OCI-LY7 (cell line): ENCODE measurements at regions of chr12 and their contacts with region 1.

Region 1: GRCh38 chr12:3299929-3300832 is 190.8 kb upstream of the PRMT8 start:
- DNase-seq: peak; percentile 78
- H3K4me3 ChIP-seq: no peak overlapping the region
- H3K27ac ChIP-seq: no peak overlapping the region
- H3K4me1 ChIP-seq: no peaks in the 10 kb centered on the region
- CTCF ChIP-seq: peak; percentile 86

Region 2: GRCh38 chr12:1398673-1399072 is 1901.5 kb before region 1 on chr12:
- CTCF ChIA-PET with region 1: no interaction called
- POLR2A ChIA-PET with region 1: interaction called, 11 read pairs
- intact Hi-C with region 1: no loop called
- DNase-seq: no peak
- H3K4me3 ChIP-seq: no peak overlapping the region
- H3K27ac ChIP-seq: no peak overlapping the region
- H3K4me1 ChIP-seq: no peaks in the 10 kb centered on the region
- CTCF ChIP-seq: no peak

Region 3: DNA sequence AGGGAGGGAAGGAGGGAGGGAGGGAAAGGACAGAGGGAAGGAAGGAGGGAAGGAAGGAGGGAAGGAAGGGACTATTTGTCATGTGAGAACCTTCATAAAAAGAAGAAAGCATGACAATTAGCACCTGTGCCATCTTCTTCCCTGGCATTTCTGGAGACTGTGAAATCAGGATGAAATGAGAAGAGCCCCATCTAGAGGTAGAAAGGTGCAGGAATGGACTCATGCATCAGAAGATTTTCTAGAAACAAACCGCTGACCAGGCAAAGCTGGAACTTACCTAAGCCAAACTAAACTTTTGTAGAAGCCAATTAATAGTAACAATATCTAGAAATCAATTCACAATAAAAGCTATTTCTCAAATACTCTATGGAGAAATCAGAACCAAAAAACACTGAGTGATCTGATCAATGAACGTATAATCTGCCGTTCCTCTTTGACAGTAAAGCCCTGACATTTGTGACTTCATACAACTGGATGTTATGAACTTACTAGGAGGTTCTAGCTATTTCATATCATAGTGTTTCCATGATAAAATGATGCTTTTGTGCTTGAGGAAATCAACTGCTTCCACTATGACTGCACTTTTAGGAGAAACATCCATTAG is 477.1 kb after region 1 on chr12:
- CTCF ChIA-PET with region 1: interaction called, 7 read pairs
- POLR2A ChIA-PET with region 1: no interaction called
- intact Hi-C with region 1: loop called (anchors 1 kb)
- DNase-seq: peak; percentile 50
- H3K4me3 ChIP-seq: no peak overlapping the region
- H3K27ac ChIP-seq: no peak overlapping the region
- H3K4me1 ChIP-seq: no peaks in the 10 kb centered on the region
- CTCF ChIP-seq: peak; percentile 85

Region 4: DNA sequence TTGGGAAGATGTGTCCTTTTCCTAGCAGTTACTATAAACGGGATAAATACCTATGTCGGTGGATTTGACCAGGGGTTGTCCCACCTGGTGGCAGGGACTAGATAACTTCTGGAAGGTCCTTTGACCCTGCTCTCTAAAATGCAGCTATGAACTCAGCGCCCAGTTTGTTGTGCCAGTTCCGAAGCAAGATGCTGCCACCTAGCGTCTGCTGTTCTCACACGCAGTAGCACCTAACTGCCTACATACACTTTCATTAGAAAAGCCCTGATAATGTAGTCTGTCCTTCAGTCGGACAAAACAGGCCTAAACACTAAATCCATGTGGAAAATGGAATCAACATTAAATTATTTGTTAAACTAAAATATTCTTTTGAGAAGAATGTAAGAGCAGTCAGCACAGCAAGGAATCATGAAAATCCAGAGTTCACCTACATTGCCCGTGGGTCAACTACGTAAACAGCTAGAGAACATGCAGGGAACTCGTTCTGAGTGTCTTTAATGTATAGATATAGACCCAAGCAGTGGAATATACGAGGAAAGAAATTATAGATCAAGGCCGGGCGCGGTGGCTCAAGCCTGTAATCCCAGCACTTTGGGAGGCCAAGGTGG is 503.8 kb after region 1 on chr12:
- CTCF ChIA-PET with region 1: interaction called, 9 read pairs
- POLR2A ChIA-PET with region 1: no interaction called
- intact Hi-C with region 1: loop called (anchors 1 kb)
- DNase-seq: peak; percentile 74
- H3K4me3 ChIP-seq: no peak overlapping the region
- H3K27ac ChIP-seq: no peak overlapping the region
- H3K4me1 ChIP-seq: no peaks in the 10 kb centered on the region
- CTCF ChIP-seq: peak; percentile 96